ENCODE measurements at regions of chr1 and their contacts with region 1.

Region 1: GRCh38 chr1:85307987-85308832 is 31.8 kb upstream of the BCL10 start:
- DNase-seq: peak; percentile 37 to 90 (median 78)

Region 2: DNA sequence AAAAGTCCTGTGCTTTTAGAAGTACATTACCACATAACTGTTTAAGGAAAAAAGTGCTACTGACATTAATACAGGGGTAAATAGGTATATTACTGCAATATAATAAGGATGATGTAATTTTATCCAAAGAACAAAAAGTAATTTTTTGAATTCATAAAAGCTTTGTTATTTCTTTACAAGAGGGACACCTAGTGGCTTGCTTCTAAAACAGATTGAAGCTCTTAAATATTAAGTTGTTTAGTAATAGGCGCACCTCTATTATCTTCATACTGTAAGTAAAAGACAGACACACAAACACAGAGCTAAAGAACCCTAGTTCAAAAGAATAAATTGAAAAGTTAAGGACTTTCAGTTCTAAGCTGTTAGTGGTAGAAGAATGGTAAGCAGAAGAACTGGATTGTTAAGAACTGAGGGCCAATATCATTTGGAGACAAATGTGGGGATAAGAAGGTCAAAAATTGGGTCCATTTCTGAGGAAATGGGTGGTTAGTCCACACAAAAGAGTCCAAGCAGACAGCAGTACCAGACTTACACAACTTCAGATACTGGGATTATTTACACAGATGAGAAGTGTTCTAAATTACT is 384.6 kb after region 1 on chr1:
- intact Hi-C with region 1: loop called (anchors 10 kb)
- DNase-seq: no peak

Measured in head of caudate nucleus (tissue), 42 donors.